Caco-2 (cell line): ENCODE measurements at regions of chr20 and their contacts with region 1.

Region 1: DNA sequence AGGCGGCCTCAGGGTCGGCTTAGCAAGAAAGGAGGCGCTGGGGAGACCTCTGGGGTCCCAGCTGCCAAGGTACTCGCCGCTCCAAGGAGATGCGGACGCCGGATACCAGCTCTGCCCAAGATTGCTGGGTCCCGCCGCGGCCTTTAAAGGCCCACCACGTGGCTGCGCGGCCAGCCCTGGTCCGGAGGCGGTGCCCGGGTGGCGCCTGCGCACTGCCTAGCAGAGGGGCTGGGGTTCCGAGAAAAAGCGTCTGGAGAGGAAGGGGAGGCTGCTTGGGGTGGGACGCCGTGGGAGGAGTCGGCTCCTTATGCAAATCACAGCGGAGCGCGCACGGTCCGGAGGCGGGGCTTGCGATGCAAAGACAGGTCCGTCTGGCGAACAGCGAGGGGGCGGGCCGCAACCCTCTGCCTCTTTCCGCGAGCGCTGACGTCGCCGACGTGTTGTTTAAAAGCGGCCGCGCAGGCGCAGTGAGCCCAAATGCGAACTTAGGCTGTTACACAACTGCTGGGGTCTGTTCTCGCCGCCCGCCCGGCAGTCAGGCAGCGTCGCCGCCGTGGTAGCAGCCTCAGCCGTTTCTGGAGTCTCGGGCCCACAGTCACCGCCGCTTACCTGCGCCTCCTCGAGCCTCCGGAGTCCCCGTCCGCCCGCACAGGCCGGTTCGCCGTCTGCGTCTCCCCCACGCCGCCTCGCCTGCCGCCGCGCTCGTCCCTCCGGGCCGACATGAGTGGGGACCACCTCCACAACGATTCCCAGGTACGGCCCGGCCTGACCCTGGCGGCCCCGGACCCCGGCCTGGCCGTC is at the start of gene TOP1:
- DNase-seq: peak; percentile 100
- H3K4me3 ChIP-seq: peak within 1 kb of the TSS; percentile 99
- H3K4me3 Mint-ChIP-seq: peak within 1 kb of the TSS; percentile 96
- H3K27ac Mint-ChIP-seq: peak within 1 kb of the TSS; percentile 100
- H3K4me1 ChIP-seq: peaks cover 40% of the 10 kb centered on the region
- H3K4me1 Mint-ChIP-seq: peaks cover 53% of the 10 kb centered on the region
- H3K27me3 ChIP-seq: no peaks in the 10 kb centered on the region
- H3K27me3 Mint-ChIP-seq: no peaks in the 10 kb centered on the region
- CTCF ChIP-seq: peak in 1 of 2 experiments; percentile 19
- total RNA-seq, gene TOP1: 142 and 144 TPM in 2 replicates

Region 2: DNA sequence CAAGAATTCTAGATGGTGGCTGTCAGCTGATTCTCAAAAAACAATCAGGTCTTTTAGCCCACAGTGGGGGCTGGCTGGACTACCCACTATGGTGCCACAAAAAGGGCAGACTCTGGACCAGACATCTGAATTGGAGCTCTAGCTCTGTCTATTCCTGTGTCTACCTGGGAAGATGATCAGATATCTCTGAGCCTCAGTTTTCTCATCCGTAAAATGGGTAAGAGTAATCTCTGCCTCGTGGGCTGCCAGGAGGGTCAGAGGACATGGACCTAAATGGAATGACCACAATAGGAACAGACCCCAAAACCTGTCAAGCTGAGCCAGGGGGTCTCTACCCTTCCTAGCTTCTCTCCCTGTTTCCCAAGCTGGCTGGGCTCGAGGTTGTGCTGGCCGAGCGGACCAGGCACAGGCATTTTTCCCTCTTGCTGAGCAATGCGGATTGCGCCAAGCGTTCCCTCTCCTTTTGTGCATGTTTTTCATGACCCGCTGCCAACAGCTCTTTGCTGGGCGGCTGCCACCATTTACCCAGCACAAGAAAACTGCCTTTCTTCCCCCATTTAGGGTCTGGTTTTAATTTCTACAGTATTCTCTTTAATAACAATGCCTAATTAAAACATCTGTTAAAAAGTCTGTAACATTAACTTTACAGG is 264.8 kb before region 1 on chr20:
- CTCF ChIA-PET with region 1: no interaction called
- POLR2A ChIA-PET with region 1: no interaction called
- intact Hi-C with region 1: no loop called
- DNase-seq: no peak
- H3K4me3 ChIP-seq: no peak overlapping the region
- H3K4me3 Mint-ChIP-seq: no peak overlapping the region
- H3K27ac Mint-ChIP-seq: no peak overlapping the region
- H3K4me1 ChIP-seq: no peaks in the 10 kb centered on the region
- H3K4me1 Mint-ChIP-seq: no peaks in the 10 kb centered on the region
- H3K27me3 ChIP-seq: peaks cover 2% of the 10 kb centered on the region
- H3K27me3 Mint-ChIP-seq: peaks cover 27% of the 10 kb centered on the region
- CTCF ChIP-seq: no peak

Region 3: DNA sequence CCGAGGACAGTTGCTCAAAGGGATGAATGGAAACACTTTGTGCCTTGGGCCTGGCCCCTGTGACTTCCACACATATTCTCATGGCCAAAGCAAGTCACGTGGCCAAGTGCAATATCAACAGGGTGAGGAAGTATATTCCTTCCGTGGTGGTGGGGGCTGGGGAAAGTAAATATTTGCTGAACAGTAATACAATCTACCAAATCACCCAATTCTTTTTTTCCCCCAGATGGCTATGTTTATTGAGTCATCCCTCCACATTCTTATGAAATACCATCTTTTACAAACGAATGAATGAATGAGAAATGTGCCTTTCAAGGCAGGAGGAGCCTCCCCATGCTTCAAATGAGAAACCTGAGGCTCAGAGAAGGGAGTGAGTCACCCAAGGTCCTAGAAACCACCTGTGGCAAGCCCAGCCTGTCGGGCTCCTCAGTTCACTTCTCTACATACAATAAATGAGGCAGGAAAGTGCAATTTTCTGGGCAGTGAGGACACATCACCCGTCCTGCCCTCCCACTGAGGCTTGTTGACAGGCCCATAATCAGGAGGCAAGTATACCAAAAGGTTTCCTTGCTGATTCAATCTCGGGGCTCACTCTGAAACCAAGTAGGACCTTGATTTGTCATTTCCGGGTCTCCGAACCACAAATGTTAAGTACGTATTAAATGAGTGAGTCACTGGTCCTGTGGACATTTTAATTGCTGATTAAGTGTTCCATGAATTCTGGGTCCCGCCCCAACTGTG is 25.2 kb before region 1 on chr20:
- CTCF ChIA-PET with region 1: no interaction called
- POLR2A ChIA-PET with region 1: interaction called, 3 read pairs
- intact Hi-C with region 1: loop called (anchors 1 kb)
- DNase-seq: peak; percentile 93 to 96
- H3K4me3 ChIP-seq: no peak overlapping the region
- H3K4me3 Mint-ChIP-seq: peak overlapping the region; percentile 65
- H3K27ac Mint-ChIP-seq: peak overlapping the region; percentile 89
- H3K4me1 ChIP-seq: peaks cover 38% of the 10 kb centered on the region
- H3K4me1 Mint-ChIP-seq: peaks cover 39% of the 10 kb centered on the region
- H3K27me3 ChIP-seq: no peaks in the 10 kb centered on the region
- H3K27me3 Mint-ChIP-seq: no peaks in the 10 kb centered on the region
- CTCF ChIP-seq: no peak

Region 4: DNA sequence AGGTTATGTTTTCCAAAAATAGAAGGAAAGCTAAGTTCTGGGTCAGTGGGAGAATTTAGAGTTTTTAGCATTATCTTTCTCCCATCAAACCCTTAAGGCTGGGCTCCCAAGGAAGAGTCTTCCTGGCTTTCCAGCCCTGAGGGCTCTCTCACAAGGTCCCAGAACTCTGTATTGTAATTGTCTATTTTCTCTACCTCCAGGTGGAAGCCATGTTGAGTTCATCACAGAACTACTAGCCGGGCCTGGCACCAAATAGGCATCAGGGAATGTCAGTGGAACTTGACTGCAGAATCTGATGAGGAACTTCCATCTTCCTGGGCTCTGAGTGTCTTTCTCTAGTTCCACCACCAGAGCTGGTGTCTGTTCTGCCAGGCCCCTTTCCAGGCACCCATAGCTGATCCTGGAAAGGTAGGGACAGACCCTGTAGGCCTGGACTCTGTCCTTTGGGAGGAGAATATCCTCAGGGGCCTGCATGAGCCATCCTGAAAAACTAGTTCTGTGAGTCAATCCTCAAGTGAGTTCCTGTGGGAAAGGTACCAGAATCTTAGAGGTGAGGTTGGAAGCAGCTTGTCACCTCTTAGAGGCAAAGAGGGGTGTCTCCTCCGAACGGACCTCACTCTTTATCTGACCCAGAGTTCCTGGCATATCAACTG is 11.0 kb before region 1 on chr20:
- CTCF ChIA-PET with region 1: interaction called, 5 read pairs
- POLR2A ChIA-PET with region 1: interaction called, 10 read pairs
- intact Hi-C with region 1: loop called (anchors 1 kb)
- DNase-seq: peak; percentile 91 to 93
- H3K4me3 ChIP-seq: no peak overlapping the region
- H3K4me3 Mint-ChIP-seq: peak overlapping the region; percentile 49
- H3K27ac Mint-ChIP-seq: peak overlapping the region; percentile 46
- H3K4me1 ChIP-seq: peaks cover 32% of the 10 kb centered on the region
- H3K4me1 Mint-ChIP-seq: peaks cover 54% of the 10 kb centered on the region
- H3K27me3 ChIP-seq: no peaks in the 10 kb centered on the region
- H3K27me3 Mint-ChIP-seq: no peaks in the 10 kb centered on the region
- CTCF ChIP-seq: peak; percentile 40 to 45

Region 5: DNA sequence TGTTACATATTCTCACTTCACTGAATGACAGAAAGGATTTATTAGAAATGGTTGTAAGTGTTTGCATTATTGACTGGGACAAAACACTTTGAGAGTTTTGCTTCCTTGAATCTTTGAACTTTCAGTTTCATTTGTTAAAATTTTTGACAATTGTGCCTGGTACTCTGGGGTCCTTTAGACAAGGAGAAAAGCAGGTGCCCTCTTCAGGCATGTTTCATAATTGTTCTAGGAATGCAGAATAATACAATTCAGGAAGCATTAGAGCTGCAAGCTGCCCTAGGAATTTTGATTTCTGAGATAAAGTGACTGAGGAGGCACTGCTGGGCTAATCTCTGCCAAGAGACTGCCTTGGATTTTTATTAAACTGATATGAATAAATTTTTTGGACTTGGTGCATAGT is 49.8 kb after region 1 on chr20:
- CTCF ChIA-PET with region 1: interaction called, 3 read pairs
- POLR2A ChIA-PET with region 1: no interaction called
- intact Hi-C with region 1: loop called (anchors 1 kb)
- DNase-seq: peak in 1 of 2 experiments; percentile 80
- H3K4me3 ChIP-seq: no peak overlapping the region
- H3K4me3 Mint-ChIP-seq: no peak overlapping the region
- H3K27ac Mint-ChIP-seq: peak overlapping the region; percentile 18
- H3K4me1 ChIP-seq: peaks cover 17% of the 10 kb centered on the region
- H3K4me1 Mint-ChIP-seq: peaks cover 29% of the 10 kb centered on the region
- H3K27me3 ChIP-seq: no peaks in the 10 kb centered on the region
- H3K27me3 Mint-ChIP-seq: no peaks in the 10 kb centered on the region
- CTCF ChIP-seq: peak; percentile 85 to 86

Region 6: GRCh38 chr20:41136680-41137613 is 108.4 kb after region 1 on chr20 and contains the start of gene PLCG1:
- CTCF ChIA-PET with region 1: interaction called, 5 read pairs
- POLR2A ChIA-PET with region 1: no interaction called
- intact Hi-C with region 1: loop called (anchors 2 kb)
- DNase-seq: peak; percentile 93 to 99
- H3K4me3 ChIP-seq: peak within 1 kb of the TSS; percentile 96
- H3K4me3 Mint-ChIP-seq: peak within 1 kb of the TSS; percentile 83
- H3K27ac Mint-ChIP-seq: peak within 1 kb of the TSS; percentile 82
- H3K4me1 ChIP-seq: peaks cover 17% of the 10 kb centered on the region
- H3K4me1 Mint-ChIP-seq: peaks cover 21% of the 10 kb centered on the region
- H3K27me3 ChIP-seq: no peaks in the 10 kb centered on the region
- H3K27me3 Mint-ChIP-seq: no peaks in the 10 kb centered on the region
- CTCF ChIP-seq: no peak
- total RNA-seq, gene PLCG1: 196 and 205 TPM in 2 replicates

Region 7: GRCh38 chr20:41733151-41733550 is 704.6 kb after region 1 on chr20:
- CTCF ChIA-PET with region 1: no interaction called
- POLR2A ChIA-PET with region 1: no interaction called
- intact Hi-C with region 1: no loop called
- DNase-seq: no peak
- H3K4me3 ChIP-seq: no peak overlapping the region
- H3K4me3 Mint-ChIP-seq: no peak overlapping the region
- H3K27ac Mint-ChIP-seq: no peak overlapping the region
- H3K4me1 ChIP-seq: peaks cover 4% of the 10 kb centered on the region; the same call in 1 of the 2 replicates
- H3K4me1 Mint-ChIP-seq: no peaks in the 10 kb centered on the region
- H3K27me3 ChIP-seq: no peaks in the 10 kb centered on the region
- H3K27me3 Mint-ChIP-seq: no peaks in the 10 kb centered on the region
- CTCF ChIP-seq: no peak